ENCODE measurements at regions of chr6 and their contacts with region 1.

Region 1: GRCh38 chr6:159098636-159099106 is 53.9 kb upstream of the TAGAP start:
- DNase-seq: peak; percentile 80
- ATAC-seq: peak; percentile 52
- H3K4me3 Mint-ChIP-seq: peak overlapping the region; percentile 54
- H3K27ac Mint-ChIP-seq: peak overlapping the region; percentile 91
- H3K4me1 Mint-ChIP-seq: peaks cover 83% of the 10 kb centered on the region
- H3K27me3 Mint-ChIP-seq: no peaks in the 10 kb centered on the region

Region 2: DNA sequence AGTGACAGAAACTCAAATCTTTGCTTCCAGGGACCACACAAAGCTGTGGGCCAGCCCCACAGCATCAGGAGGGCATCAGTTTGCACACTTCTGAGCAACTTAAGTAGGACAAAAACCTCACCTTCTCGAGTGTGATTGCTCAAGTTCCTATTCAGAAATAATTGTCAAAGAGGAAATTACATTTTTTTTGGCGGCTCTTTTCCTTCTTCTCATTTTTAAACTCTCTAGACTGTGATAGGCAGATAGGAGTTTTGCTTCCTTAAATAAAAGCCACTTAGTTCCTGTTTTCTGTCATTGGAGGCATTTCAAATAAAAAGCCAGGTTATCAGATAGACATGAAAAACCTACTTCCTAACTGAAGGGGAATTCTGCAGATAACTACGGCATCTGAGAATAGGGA is 42.7 kb before region 1 on chr6:
- CTCF ChIA-PET with region 1: interaction called, 10 read pairs
- POLR2A ChIA-PET with region 1: interaction called, 4 read pairs
- intact Hi-C with region 1: loop called (anchors 1 kb)
- DNase-seq: no peak
- ATAC-seq: no peak
- H3K4me3 Mint-ChIP-seq: peak overlapping the region; percentile 13
- H3K27ac Mint-ChIP-seq: peak overlapping the region; percentile 89
- H3K4me1 Mint-ChIP-seq: peaks cover 67% of the 10 kb centered on the region
- H3K27me3 Mint-ChIP-seq: no peaks in the 10 kb centered on the region

Region 3: DNA sequence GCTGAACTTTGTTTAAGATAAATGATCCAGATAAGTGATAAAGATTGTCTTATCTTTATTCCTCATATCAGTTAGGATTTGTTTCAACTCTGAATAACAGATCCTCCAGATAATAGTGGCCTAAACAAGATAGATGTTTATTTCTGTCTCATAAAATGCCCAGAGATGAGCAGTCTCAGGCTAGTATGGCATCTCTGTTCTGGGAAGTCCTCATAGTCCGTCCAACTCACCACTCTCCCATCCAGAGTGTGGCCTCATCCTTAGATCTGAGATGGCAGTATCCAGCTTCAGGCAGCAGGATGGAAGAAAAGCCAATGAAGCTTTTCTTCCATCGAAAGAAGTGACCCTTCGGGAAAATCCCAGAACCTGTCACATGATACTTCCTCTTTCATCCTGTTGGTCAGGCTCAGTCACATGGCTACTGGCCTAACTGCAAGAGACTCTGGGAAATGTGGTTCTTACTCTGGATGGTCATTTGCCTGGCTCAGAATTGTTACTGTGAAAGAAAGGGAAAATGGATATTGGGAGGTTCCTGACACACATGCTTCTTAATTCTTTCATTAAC is 24.5 kb before region 1 on chr6:
- CTCF ChIA-PET with region 1: interaction called, 10 read pairs
- POLR2A ChIA-PET with region 1: interaction called, 3 read pairs
- intact Hi-C with region 1: no loop called
- DNase-seq: no peak
- ATAC-seq: no peak
- H3K4me3 Mint-ChIP-seq: no peak overlapping the region
- H3K27ac Mint-ChIP-seq: no peak overlapping the region
- H3K4me1 Mint-ChIP-seq: peaks cover 42% of the 10 kb centered on the region
- H3K27me3 Mint-ChIP-seq: no peaks in the 10 kb centered on the region

Region 4: GRCh38 chr6:159080217-159080976 is 18.3 kb before region 1 on chr6:
- CTCF ChIA-PET with region 1: interaction called, 4 read pairs
- POLR2A ChIA-PET with region 1: interaction called, 3 read pairs
- intact Hi-C with region 1: loop called in 1 of 2 experiments (anchors 2 kb)
- DNase-seq: peak; percentile 39
- ATAC-seq: peak; percentile 86
- H3K4me3 Mint-ChIP-seq: no peak overlapping the region
- H3K27ac Mint-ChIP-seq: peak overlapping the region; percentile 51
- H3K4me1 Mint-ChIP-seq: peaks cover 42% of the 10 kb centered on the region
- H3K27me3 Mint-ChIP-seq: no peaks in the 10 kb centered on the region

Region 5: DNA sequence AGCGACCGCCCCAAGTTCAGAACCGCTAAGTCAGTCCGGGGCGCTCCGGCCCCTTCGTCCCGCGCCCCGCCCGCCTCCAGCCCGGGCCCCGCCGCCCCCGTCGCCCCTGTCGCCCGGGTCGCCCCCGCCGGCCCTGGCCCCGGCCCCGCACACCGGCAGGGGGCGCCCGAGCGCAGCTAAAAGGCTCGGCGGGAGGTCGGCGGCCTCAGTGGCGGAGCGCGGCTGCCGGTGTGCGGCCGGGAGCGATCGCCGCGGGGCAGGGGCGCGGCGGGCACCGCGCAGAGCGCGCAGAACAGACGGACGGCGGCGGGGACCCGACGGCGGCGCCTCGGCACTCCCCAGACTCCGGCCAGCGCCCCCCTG is 70.5 kb after region 1 on chr6 and contains the start of gene FNDC1:
- CTCF ChIA-PET with region 1: no interaction called
- POLR2A ChIA-PET with region 1: no interaction called
- intact Hi-C with region 1: no loop called
- DNase-seq: peak; percentile 82
- ATAC-seq: peak; percentile 87
- H3K4me3 Mint-ChIP-seq: peak within 1 kb of the TSS; percentile 60
- H3K27ac Mint-ChIP-seq: no peak within 1 kb of the TSS
- H3K4me1 Mint-ChIP-seq: peaks cover 16% of the 10 kb centered on the region
- H3K27me3 Mint-ChIP-seq: peaks cover 80% of the 10 kb centered on the region
- total RNA-seq, gene FNDC1: not detected

Region 6: GRCh38 chr6:159267165-159267564 is 168.5 kb after region 1 on chr6:
- CTCF ChIA-PET with region 1: no interaction called
- POLR2A ChIA-PET with region 1: no interaction called
- intact Hi-C with region 1: no loop called
- DNase-seq: peak; percentile 41
- ATAC-seq: no peak
- H3K4me3 Mint-ChIP-seq: no peak overlapping the region
- H3K27ac Mint-ChIP-seq: no peak overlapping the region
- H3K4me1 Mint-ChIP-seq: no peaks in the 10 kb centered on the region
- H3K27me3 Mint-ChIP-seq: peaks cover 8% of the 10 kb centered on the region